ENCODE measurements at regions of chr18 and their contacts with region 1.

Region 1: DNA sequence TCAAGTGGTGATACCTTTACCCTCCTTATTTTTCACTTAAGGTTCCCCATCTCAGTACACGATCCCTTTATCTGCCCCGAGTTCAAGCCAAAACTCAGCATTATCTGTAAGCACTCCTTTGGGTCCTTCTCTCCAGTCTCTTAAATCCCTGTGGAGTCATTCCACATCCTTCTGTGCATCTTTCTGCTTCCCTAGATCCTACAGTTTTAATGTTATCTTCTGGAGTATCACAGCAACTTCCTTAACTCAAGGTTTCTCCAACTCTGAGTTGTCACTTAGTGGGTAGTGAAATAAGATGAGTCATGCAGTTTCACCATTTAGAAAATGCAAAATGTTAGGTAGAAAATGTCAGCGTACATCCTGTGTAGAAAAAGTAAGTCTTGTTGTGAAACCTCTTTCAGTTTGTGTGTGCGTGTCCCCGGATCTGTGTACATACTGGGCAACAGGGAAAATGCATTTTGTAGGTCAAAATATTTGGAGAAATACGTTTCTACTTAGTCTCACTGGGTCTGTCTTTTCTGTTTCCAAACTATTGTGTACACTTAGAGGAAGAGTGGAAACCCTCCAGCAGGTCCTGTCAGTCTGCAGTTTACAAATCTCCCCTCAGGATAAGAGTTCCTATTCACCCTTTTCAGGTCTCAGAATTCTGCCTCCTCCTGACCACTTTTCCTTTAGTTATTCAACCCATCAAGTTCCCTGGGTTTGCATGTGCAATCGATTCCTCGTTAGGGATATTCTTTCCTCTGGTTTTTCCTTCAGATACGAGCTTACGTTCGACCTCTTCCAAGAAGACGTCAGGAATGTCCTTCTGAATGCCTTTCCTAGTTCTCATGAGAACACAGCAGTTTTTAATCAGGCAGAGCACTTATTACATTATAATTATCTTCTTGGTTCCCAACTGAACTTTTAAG is 154.8 kb downstream of the TGIF1 start:
- DNase-seq: peak; percentile 52
- ATAC-seq: peak; percentile 68
- H3K4me3 ChIP-seq: peak overlapping the region; percentile 4 to 81 (median 53)
- H3K4me3 Mint-ChIP-seq: no peak overlapping the region
- H3K27ac ChIP-seq: peak overlapping the region; percentile 16 to 21
- H3K27ac Mint-ChIP-seq: no peak overlapping the region
- H3K4me1 ChIP-seq: peaks cover 36 to 38% of the 10 kb centered on the region in 2 donors
- H3K4me1 Mint-ChIP-seq: peaks cover 5% of the 10 kb centered on the region
- H3K27me3 ChIP-seq: no peaks in the 10 kb centered on the region
- H3K27me3 Mint-ChIP-seq: no peaks in the 10 kb centered on the region
- CTCF ChIP-seq: no peak

Region 2: DNA sequence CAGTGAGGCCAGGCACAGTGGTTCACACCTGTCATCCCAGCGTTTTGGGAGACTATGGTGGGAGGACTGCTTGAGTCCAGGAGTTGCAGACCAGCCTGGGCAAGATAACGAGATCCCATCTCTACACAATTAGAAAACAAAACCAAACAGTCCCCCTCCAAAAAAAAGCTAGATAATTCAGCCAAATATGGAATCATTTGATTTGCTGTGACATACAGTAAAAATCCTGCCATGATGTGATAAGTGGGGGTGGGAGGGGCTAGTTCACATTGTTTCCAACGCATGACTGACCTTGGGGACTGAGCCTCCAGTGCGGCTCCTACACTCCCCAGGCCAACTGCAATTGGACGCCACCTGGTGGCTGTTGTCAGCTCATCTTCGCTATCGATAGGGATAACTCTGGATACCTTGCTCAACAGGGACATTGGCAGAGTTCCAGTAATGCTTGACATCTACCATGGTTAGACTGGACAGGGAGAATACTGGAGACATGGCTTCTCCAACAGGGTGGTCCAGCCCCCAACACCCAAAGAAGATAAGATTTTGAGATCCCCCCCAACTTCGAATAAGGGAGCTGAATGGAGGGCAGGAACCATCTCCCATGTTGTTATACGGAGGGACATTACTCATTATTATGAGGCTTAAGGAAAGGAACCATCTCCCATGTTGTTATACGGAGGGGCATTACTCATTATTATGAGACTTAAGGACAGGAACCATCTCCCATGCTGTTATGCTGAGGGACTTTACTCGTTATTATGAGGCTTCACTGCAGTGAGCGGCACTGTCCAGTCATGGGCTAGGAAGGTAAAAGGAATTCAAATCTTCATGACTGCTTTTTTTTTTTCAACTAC is 18.9 kb before region 1 on chr18:
- CTCF ChIA-PET with region 1: interaction called, 13 read pairs
- POLR2A ChIA-PET with region 1: no interaction called
- intact Hi-C with region 1: no loop called
- DNase-seq: peak; percentile 80
- ATAC-seq: peak; percentile 49
- H3K4me3 ChIP-seq: peak overlapping the region in 4 of 5 experiments; percentile 9 to 22 (median 18)
- H3K4me3 Mint-ChIP-seq: peak overlapping the region; percentile 69
- H3K27ac ChIP-seq: peak overlapping the region; percentile 81 to 87
- H3K27ac Mint-ChIP-seq: peak overlapping the region; percentile 83
- H3K4me1 ChIP-seq: peaks cover 42 to 43% of the 10 kb centered on the region in 2 donors
- H3K4me1 Mint-ChIP-seq: peaks cover 47% of the 10 kb centered on the region
- H3K27me3 ChIP-seq: no peaks in the 10 kb centered on the region
- H3K27me3 Mint-ChIP-seq: no peaks in the 10 kb centered on the region
- CTCF ChIP-seq: peak; percentile 57